Activated T-helper 1 cell treated with anti-CD3 and anti-CD28 coated beads, Interleukin-12 subunit alpha, Interleukin-12 subunit beta, Interleukin-2, Interleukin-4 antibody, amounts not matched to agents 30 ng/mL and 10 ng/mL and 1 ng/mL, durations not matched to agents 14 hours and 24 hours and 36 hours (primary cell): ENCODE measurements at regions of chr14 and their contacts with region 1.

Region 1: DNA sequence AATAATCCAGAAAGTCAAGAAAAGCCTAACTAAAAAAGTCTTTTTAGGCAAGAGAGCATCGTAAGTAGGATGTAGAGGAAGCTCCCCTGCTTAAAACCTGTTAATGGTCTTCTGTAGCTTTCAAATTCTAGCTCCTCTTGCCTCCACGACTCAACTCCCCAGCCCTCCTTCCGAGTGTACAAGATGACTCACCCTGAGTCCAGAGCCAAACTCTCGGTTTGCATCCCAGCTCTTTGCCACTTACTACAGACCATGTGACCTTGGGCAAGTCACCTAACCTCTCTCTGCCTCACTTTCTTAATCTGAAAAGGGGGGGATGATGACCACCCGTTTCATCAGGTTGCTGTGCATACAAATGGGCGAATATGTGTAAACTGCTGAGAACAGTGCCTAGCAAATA is 460.4 kb downstream of the DPF3 start:
- DNase-seq: no peak
- H3K4me3 Mint-ChIP-seq: no peak overlapping the region
- H3K27ac Mint-ChIP-seq: no peak overlapping the region
- H3K4me1 Mint-ChIP-seq: peaks cover 53% of the 10 kb centered on the region
- H3K27me3 Mint-ChIP-seq: no peaks in the 10 kb centered on the region

Region 2: GRCh38 chr14:72451054-72451972 is 17.8 kb after region 1 on chr14:
- intact Hi-C with region 1: loop called (anchors 2 kb)
- DNase-seq: peak; percentile 41
- H3K4me3 Mint-ChIP-seq: peak overlapping the region; percentile 19
- H3K27ac Mint-ChIP-seq: peak overlapping the region; percentile 84
- H3K4me1 Mint-ChIP-seq: peaks cover 65% of the 10 kb centered on the region
- H3K27me3 Mint-ChIP-seq: peaks cover 1% of the 10 kb centered on the region

Region 3: GRCh38 chr14:72476657-72477499 is 43.4 kb after region 1 on chr14:
- intact Hi-C with region 1: no loop called
- DNase-seq: peak; percentile 81
- H3K4me3 Mint-ChIP-seq: peak overlapping the region; percentile 53
- H3K27ac Mint-ChIP-seq: peak overlapping the region; percentile 87
- H3K4me1 Mint-ChIP-seq: peaks cover 80% of the 10 kb centered on the region
- H3K27me3 Mint-ChIP-seq: no peaks in the 10 kb centered on the region